ENCODE measurements at regions of chr22 and their contacts with region 1.

Region 1: GRCh38 chr22:27987557-27987956 is 68.5 kb upstream of the PITPNB start:
- DNase-seq: no peak
- H3K4me3 ChIP-seq: no peak overlapping the region
- H3K27ac ChIP-seq: no peak overlapping the region
- H3K4me1 ChIP-seq: peaks cover 0 to 8% (median 0%) of the 10 kb centered on the region in 4 donors
- H3K27me3 ChIP-seq: no peaks in the 10 kb centered on the region
- CTCF ChIP-seq: no peak
- EP300 ChIP-seq: no peak
- POLR2A ChIP-seq: no peak

Region 2: GRCh38 chr22:27768027-27768653 is 219.4 kb before region 1 on chr22:
- in situ Hi-C with region 1: no loop called
- intact Hi-C with region 1: no loop called
- DNase-seq: no peak
- H3K4me3 ChIP-seq: no peak overlapping the region
- H3K27ac ChIP-seq: no peak overlapping the region
- H3K4me1 ChIP-seq: no peaks in the 10 kb centered on the region
- H3K27me3 ChIP-seq: no peaks in the 10 kb centered on the region
- CTCF ChIP-seq: no peak
- EP300 ChIP-seq: no peak
- POLR2A ChIP-seq: no peak

Region 3: GRCh38 chr22:27825174-27825573 is 162.4 kb before region 1 on chr22:
- in situ Hi-C with region 1: no loop called
- intact Hi-C with region 1: no loop called
- DNase-seq: no peak
- H3K4me3 ChIP-seq: no peak overlapping the region
- H3K27ac ChIP-seq: no peak overlapping the region
- H3K4me1 ChIP-seq: no peaks in the 10 kb centered on the region
- H3K27me3 ChIP-seq: no peaks in the 10 kb centered on the region
- CTCF ChIP-seq: peak in 2 of 5 experiments; percentile 10 to 14
- EP300 ChIP-seq: no peak
- POLR2A ChIP-seq: no peak

Region 4: GRCh38 chr22:29102300-29102699 is 1114.7 kb after region 1 on chr22:
- in situ Hi-C with region 1: no loop called
- intact Hi-C with region 1: loop called (anchors 5 kb)
- DNase-seq: no peak
- H3K4me3 ChIP-seq: no peak overlapping the region
- H3K27ac ChIP-seq: no peak overlapping the region
- H3K4me1 ChIP-seq: no peaks in the 10 kb centered on the region
- H3K27me3 ChIP-seq: no peaks in the 10 kb centered on the region
- CTCF ChIP-seq: no peak
- EP300 ChIP-seq: no peak
- POLR2A ChIP-seq: no peak